GM12878 (cell line): ENCODE measurements at regions of chr4 and their contacts with region 1.

Region 1: GRCh38 chr4:78355306-78355705 is 196.3 kb upstream of the ANXA3 start:
- DNase-seq: no peak
- ATAC-seq: no peak
- H3K4me3 ChIP-seq: no peak overlapping the region
- H3K27ac ChIP-seq: no peak overlapping the region
- H3K4me1 ChIP-seq: no peaks in the 10 kb centered on the region
- H3K27me3 ChIP-seq: no peaks in the 10 kb centered on the region; a peak in 1 of 4 replicates
- CTCF ChIP-seq: no peak
- EP300 ChIP-seq: no peak
- POLR2A ChIP-seq: no peak
- RAD21 ChIP-seq: no peak

Region 2: DNA sequence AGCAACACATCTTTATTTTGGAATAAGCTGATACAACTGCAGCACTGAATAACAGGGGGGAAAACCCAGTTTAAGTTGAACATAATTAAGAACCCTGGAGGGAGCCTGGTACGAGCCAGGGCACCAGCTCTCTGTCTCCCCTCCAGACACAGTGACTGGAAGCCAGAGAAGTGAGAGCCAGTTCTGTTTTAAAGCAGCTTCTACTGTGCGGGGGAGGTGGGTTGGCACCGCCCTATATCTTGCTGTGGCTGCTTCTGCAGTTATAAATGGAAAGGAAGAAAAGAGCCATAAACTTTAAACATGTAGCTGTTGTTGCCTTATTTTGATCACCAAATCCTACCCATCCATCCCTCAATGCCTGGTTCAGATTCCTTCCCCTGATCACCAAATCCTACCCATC is 11.6 kb before region 1 on chr4:
- CTCF ChIA-PET with region 1: interaction called, 8 read pairs
- POLR2A ChIA-PET with region 1: interaction called, 3 read pairs
- RAD21 ChIA-PET with region 1: interaction called, 5 read pairs
- SMC1A ChIA-PET with region 1: interaction called, 18 read pairs
- in situ Hi-C with region 1: no loop called
- intact Hi-C with region 1: no loop called
- DNase-seq: no peak
- ATAC-seq: peak; percentile 42; the same call in 2 of the 3 replicates
- H3K4me3 ChIP-seq: no peak overlapping the region
- H3K27ac ChIP-seq: no peak overlapping the region
- H3K4me1 ChIP-seq: no peaks in the 10 kb centered on the region
- H3K27me3 ChIP-seq: no peaks in the 10 kb centered on the region
- CTCF ChIP-seq: no peak
- EP300 ChIP-seq: no peak
- POLR2A ChIP-seq: no peak
- RAD21 ChIP-seq: no peak